Left colon (tissue), 2 donors: ENCODE measurements at regions of chr18 and their contacts with region 1.

Region 1: GRCh38 chr18:50973367-50974126 is 5.7 kb downstream of the ELAC1 start:
- DNase-seq: no peak
- ATAC-seq: peak; percentile 92

Region 2: DNA sequence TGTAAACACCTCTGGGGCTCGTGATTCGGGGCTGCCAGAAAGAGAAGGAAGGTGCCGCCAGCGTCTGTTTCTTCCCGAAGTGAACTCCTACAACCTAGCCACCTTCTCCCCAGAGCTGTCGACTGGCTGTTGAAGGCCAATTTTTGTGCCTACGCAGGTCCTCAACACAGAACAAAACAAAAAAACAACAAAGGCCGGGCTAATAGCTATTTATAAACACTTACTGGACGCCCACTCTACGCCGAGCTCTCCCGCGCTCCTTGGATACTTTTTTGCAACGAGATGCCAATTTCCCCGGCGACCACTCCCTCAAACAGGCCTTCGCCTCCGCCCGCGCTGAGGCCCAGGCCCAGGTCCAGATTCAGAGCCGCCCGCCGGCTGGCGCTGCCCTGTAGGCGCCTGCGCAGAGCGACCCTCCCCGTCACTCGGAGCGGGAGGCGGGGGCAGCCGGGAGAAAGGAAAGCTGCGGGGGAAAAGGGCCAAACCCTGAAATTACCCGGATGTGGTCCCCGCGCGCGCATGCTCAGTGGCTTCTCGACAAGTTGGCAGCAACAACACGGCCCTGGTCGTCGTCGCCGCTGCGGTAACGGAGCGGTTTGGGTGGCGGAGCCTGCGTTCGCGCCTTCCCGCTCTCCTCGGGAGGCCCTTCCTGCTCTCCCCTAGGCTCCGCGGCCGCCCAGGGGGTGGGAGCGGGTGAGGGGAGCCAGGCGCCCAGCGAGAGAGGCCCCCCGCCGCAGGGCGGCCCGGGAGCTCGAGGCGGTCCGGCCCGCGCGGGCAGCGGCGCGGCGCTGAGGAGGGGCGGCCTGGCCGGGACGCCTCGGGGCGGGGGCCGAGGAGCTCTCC is 56.4 kb after region 1 on chr18 and contains the start of gene SMAD4:
- intact Hi-C with region 1: loop called in 1 of 2 experiments (anchors 10 kb)
- DNase-seq: peak; percentile 96 to 97
- ATAC-seq: peak; percentile 87
- total RNA-seq, gene SMAD4: 76.1 to 100 TPM

Region 3: GRCh38 chr18:51988277-51988676 is 1014.7 kb after region 1 on chr18:
- intact Hi-C with region 1: no loop called
- DNase-seq: no peak
- ATAC-seq: no peak